GM10248 (cell line): ENCODE measurements at regions of chr1 and their contacts with region 1.

Region 1: DNA sequence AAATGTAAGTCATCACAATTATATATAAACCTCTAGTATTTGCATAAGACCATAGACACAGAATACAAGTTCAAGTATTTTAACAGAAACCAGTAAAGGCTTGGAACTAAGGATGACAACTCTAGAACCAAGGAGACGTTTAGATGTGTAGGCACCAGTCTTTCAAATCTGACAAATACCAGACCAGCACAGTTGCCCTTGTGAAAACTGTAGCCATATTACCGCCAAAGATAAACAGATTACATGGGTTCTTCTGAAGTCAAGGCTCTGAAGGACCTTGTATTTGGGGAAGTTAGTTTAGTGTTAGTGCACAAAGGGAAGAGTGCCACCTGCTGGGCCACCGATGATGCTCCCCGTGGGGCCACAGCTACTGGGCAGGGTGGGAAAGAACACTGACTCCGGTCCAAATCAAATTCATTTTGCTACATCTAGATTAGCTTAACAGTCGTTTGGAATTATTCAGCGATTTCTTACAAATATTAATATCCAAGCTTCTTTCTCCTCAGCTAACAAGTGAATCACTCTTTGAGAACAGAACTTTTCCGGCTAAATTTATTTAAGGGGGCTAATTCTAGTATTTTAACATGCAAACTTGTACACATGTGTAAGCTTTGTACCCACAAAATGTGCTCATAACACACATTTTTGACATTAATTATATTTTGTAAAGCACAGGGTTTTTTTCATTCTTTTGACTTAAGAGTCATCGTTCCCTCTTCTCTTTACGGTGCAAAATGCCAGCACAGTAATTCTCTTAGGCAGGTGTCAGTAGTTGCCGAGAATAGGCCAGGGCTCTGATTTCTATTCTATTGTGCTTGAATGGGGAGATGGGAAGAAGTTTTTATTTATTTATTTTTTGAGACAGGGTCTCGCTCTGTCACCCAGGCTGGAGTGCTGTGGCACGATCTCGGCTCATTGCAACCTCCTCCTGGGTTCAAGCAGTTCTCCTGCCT is 8.0 kb upstream of the NIBAN1 start:
- DNase-seq: peak; percentile 73
- CTCF ChIP-seq: peak; percentile 94

Region 2: GRCh38 chr1:184792450-184792969 is 189.8 kb before region 1 on chr1:
- CTCF ChIA-PET with region 1: interaction called, 11 read pairs
- POLR2A ChIA-PET with region 1: no interaction called
- DNase-seq: no peak
- CTCF ChIP-seq: no peak

Region 3: GRCh38 chr1:184827600-184828368 is 154.5 kb before region 1 on chr1:
- CTCF ChIA-PET with region 1: interaction called, 15 read pairs
- POLR2A ChIA-PET with region 1: no interaction called
- DNase-seq: no peak
- CTCF ChIP-seq: no peak

Region 4: GRCh38 chr1:184881941-184882913 is 100.1 kb before region 1 on chr1:
- CTCF ChIA-PET with region 1: no interaction called
- POLR2A ChIA-PET with region 1: no interaction called
- DNase-seq: no peak
- CTCF ChIP-seq: no peak

Region 5: GRCh38 chr1:185008838-185009237 is 26.6 kb after region 1 on chr1:
- CTCF ChIA-PET with region 1: no interaction called
- POLR2A ChIA-PET with region 1: no interaction called
- DNase-seq: no peak
- CTCF ChIP-seq: no peak